ENCODE measurements at regions of chr5 and their contacts with region 1.

Region 1: DNA sequence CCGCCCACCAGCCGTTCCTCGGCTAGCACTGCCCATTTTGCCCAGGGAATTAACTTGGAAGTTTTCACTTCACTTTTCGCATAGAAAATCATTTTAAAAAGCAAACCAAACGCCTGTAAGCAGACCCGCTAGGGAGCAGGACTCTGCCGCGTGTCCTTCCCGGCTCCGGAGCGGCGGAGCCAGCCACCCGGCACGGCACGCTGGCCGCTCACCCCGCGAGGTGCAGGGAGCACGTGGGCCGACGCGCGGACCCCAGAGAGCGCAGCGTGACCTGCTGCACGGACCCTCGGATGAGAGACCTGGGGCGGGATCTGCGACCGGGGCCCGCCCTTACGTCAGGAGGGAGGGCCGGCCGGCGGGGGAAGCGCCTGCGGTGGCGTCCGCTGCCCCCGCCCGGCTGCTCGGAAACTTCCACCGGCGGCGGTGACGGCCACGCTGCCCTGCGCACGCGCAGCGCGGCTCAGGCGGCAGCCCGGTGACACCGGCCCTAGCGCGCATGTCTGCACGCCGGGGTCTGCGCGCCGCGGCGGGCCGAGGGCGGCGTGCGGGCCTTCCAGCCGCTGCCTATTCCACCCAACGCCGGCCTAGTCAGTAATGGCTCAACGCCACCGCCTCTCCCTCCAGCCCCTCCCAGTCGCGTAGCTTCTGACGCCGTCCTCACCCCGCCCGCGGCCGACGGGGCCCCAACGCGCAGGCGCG is 506 bp upstream of the TENT4A start:
- DNase-seq: peak; percentile 97 to 98 (median 98)
- H3K4me3 ChIP-seq: peak overlapping the region; percentile 72
- H3K27ac ChIP-seq: peak overlapping the region; percentile 85 to 86
- H3K4me1 ChIP-seq: peaks cover 20% of the 10 kb centered on the region
- H3K27me3 ChIP-seq: no peaks in the 10 kb centered on the region
- CTCF ChIP-seq: peak in 1 of 3 donors; percentile 27
- EP300 ChIP-seq: no peak
- POLR2A ChIP-seq: peak; percentile 57

Region 2: DNA sequence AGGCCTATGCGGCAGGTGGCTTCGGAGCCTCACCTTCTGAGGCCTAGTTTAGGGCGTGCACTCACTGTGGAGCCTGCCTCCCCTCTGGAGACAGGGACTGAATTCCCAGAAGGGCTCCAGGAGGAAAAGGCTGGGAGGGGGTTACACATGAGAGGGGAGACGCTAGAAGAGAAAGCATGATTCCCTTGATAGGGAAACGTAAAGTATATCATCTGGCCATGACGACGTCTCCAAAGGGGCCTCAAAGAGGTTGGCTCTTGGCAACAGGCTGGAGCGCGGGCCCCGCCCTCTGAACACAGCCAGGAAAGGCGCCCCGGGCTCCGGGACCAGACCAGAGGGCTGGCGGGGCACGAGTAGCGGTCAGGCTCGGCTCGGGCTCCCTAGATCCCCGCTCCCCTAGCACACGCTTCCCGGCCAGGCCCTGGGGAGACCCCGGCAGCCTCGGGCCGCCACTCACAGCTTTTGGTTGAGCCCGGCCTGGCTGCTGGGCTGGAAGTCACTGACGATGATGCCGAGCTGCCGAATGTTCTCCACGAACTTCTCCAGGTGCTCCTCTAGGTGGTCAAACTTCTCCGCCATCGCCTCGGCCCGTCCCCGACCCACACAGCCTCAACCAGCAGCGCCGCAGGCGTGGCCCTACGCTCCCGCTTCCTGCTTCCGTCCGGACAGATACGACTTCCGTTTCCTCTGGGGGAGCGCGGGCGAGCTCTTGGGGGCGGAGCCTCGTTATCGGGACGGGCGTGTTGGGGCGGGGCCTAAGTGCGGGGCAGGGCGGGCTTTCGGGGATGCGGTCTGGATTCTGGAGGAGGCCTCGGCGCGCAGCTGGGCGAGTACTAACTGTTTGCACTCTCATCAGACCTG is 334.6 kb before region 1 on chr5 and contains the start of gene MED10:
- intact Hi-C with region 1: loop called in 1 of 4 experiments (anchors 10 kb)
- DNase-seq: peak; percentile 95 to 97 (median 96)
- H3K4me3 ChIP-seq: peak within 1 kb of the TSS; percentile 68
- H3K27ac ChIP-seq: peak within 1 kb of the TSS; percentile 52 to 72
- H3K4me1 ChIP-seq: peaks cover 5% of the 10 kb centered on the region
- H3K27me3 ChIP-seq: no peaks in the 10 kb centered on the region
- CTCF ChIP-seq: no peak
- EP300 ChIP-seq: no peak
- POLR2A ChIP-seq: peak; percentile 52
- total RNA-seq, gene MED10: 18.2 to 32.7 (median 22.9) TPM